Activated CD8-positive, alpha-beta memory T cell treated with anti-CD3 and anti-CD28 coated beads, Interleukin-2, amount 10 ng/mL, durations not matched to agents 7 days and 5 days (primary cell): ENCODE measurements at regions of chr10 and their contacts with region 1.

Region 1: DNA sequence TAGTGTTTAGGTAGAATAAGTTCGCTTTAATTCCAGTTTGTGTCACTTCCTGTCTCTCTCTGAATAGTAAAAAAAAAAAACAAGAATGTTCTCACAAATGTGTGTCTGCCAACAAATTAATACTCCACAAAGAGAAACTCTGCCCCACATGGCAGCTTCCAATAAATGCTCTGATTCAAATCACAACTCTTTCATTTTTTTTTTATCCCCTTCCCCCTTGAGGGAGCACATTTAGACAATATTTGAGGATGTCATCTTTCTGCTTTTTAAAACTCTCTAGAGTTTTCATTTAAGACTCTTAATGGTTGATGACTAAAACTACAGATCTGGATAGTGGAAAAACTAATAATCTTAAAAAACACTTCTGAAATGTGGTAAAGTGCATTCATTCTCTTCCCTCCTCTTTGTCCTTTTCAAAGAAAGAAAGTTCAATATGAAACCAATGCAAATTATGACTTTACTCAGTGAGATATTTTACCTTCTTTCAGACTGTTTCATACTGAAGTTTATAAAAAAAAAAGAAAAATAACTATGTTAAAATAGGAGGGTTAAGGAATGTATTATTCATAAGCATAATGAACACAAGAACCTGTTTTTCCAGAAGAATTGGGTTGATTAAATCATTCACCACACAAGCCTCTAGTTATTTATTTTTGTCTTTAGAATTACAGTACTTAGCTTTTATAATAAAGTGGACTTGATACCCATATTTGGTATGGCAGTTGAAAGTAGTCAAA is 42.3 kb downstream of the ARID5B start:
- DNase-seq: no peak
- ATAC-seq: peak; percentile 50
- H3K4me3 Mint-ChIP-seq: peak overlapping the region; percentile 73
- H3K27ac Mint-ChIP-seq: peak overlapping the region; percentile 98
- H3K4me1 Mint-ChIP-seq: peaks cover 57% of the 10 kb centered on the region
- H3K27me3 Mint-ChIP-seq: no peaks in the 10 kb centered on the region

Region 2: DNA sequence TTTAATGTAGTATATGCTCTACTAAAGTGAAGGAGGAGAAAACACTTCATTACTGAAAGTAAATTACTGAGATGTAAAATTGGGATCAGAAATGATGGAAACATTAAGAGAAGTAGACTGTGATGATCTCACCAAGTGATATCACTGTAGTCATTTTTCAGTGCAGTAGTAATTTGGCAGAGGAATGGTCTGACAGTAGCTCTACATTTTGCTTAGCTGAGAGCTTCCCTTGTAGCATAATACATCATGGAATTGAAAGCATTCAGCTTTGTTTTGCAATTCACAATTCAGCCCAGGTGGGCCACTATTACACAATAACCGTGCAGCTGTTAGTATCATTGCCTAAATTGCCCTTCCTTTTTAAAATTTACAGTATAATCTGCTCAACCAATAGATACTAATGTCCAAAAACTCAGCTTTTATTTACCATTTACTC is 300.5 kb before region 1 on chr10:
- CTCF ChIA-PET with region 1: no interaction called
- DNase-seq: no peak
- ATAC-seq: no peak
- H3K4me3 Mint-ChIP-seq: no peak overlapping the region
- H3K27ac Mint-ChIP-seq: no peak overlapping the region
- H3K4me1 Mint-ChIP-seq: peaks cover 5% of the 10 kb centered on the region
- H3K27me3 Mint-ChIP-seq: peaks cover 8% of the 10 kb centered on the region

Region 3: GRCh38 chr10:61822781-61823230 is 121.0 kb before region 1 on chr10:
- CTCF ChIA-PET with region 1: no interaction called
- DNase-seq: no peak
- ATAC-seq: no peak
- H3K4me3 Mint-ChIP-seq: no peak overlapping the region
- H3K27ac Mint-ChIP-seq: no peak overlapping the region
- H3K4me1 Mint-ChIP-seq: peaks cover 8% of the 10 kb centered on the region
- H3K27me3 Mint-ChIP-seq: no peaks in the 10 kb centered on the region

Region 4: GRCh38 chr10:61961278-61961677 is 17.4 kb after region 1 on chr10:
- CTCF ChIA-PET with region 1: interaction called, 10 read pairs
- DNase-seq: peak; percentile 76
- ATAC-seq: peak; percentile 81
- H3K4me3 Mint-ChIP-seq: peak overlapping the region; percentile 52
- H3K27ac Mint-ChIP-seq: peak overlapping the region; percentile 85
- H3K4me1 Mint-ChIP-seq: peaks cover 79% of the 10 kb centered on the region
- H3K27me3 Mint-ChIP-seq: no peaks in the 10 kb centered on the region

Region 5: GRCh38 chr10:61974601-61975390 is 31.0 kb after region 1 on chr10:
- CTCF ChIA-PET with region 1: no interaction called
- DNase-seq: no peak
- ATAC-seq: no peak
- H3K4me3 Mint-ChIP-seq: no peak overlapping the region
- H3K27ac Mint-ChIP-seq: no peak overlapping the region
- H3K4me1 Mint-ChIP-seq: peaks cover 28% of the 10 kb centered on the region
- H3K27me3 Mint-ChIP-seq: no peaks in the 10 kb centered on the region